WTC11 (cell line): ENCODE measurements at regions of chr4 and their contacts with region 1.

Region 1: DNA sequence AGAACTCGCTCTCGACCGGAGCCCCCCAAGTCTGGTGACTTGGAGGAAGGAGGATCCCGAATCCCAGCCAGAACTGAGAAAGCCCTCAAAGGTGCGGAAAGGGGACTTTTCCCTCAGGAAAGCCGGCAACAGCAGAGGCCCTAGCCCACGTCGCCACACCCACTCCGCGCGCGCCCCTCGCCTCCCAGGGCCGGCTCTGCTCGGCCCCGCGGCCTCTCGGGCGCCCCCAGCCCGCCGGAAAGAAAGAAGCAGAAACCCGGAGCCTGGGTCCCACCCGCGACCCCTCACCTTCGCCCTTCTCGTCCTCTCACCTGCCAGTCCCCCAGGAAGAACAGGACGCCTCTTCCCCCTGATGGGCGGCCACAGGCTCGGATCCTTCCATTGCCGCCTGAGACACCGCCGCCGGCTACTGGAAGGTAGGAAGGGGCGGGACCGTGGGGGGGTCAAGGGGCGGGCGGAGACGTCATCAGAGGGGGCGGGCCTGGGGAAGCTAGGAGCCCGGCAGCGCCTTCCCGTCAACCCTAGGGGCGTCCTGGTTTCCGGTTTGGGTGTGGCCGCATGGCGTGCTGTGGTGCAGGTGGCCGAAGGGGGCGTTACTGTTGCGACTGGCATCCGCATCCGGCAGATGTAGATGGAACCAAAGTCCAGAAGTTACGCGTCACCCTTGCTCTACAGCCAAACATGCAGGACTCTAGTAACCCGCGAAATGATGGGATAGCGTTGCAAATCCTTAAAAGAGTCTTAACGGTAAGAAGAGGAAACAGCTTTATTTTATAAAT is at the start of gene UBA6:
- DNase-seq: peak; percentile 96
- ATAC-seq: peak; percentile 97
- H3K4me3 Mint-ChIP-seq: peak within 1 kb of the TSS; percentile 88
- H3K27ac Mint-ChIP-seq: peak within 1 kb of the TSS; percentile 97
- H3K4me1 Mint-ChIP-seq: peaks cover 27% of the 10 kb centered on the region
- H3K27me3 Mint-ChIP-seq: no peaks in the 10 kb centered on the region
- CTCF ChIP-seq: peak; percentile 38; the same call in 1 of the 2 replicates
- total RNA-seq, gene UBA6: 71.5 to 81.5 TPM (median 79.0 TPM) in 3 replicates

Region 2: GRCh38 chr4:67638136-67638535 is 62.8 kb before region 1 on chr4:
- CTCF ChIA-PET with region 1: no interaction called
- POLR2A ChIA-PET with region 1: no interaction called
- DNase-seq: no peak
- ATAC-seq: no peak
- H3K4me3 Mint-ChIP-seq: no peak overlapping the region
- H3K27ac Mint-ChIP-seq: no peak overlapping the region
- H3K4me1 Mint-ChIP-seq: no peaks in the 10 kb centered on the region
- H3K27me3 Mint-ChIP-seq: no peaks in the 10 kb centered on the region
- CTCF ChIP-seq: no peak

Region 3: DNA sequence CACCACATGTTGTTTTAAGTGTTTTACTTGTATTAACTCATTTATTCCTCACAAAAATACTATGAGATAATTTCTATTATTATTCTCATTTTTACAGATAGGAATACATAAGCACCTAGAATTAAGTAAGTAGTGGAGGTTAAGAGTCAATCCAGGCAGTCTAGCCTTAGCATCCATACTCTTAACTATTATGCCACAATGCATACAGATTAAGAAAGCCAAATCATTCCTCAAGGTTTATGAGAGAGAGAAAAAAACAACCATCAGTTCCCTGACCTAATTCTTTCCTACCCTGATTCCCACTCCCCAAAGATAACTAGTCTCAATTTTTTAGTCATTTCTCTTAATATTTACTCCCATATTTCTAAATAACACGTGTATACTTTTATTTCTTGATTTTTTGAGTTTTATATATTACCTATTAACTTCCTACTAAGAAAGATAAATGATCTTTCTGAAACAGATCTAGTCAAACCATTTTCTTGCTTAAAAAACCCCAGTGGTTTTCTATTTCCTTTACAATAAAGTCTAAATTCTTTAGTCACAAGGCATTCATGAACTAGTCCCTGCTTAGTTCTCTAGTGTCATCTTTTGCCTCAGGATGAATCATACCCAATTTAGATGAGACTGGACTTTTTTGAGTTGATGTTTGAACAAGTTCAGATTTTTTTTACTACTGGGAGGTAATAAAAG is 15.9 kb before region 1 on chr4:
- CTCF ChIA-PET with region 1: no interaction called
- POLR2A ChIA-PET with region 1: no interaction called
- DNase-seq: no peak
- ATAC-seq: no peak
- H3K4me3 Mint-ChIP-seq: no peak overlapping the region
- H3K27ac Mint-ChIP-seq: no peak overlapping the region
- H3K4me1 Mint-ChIP-seq: peaks cover 3% of the 10 kb centered on the region; the same call in 1 of the 2 replicates
- H3K27me3 Mint-ChIP-seq: no peaks in the 10 kb centered on the region
- CTCF ChIP-seq: no peak

Region 4: DNA sequence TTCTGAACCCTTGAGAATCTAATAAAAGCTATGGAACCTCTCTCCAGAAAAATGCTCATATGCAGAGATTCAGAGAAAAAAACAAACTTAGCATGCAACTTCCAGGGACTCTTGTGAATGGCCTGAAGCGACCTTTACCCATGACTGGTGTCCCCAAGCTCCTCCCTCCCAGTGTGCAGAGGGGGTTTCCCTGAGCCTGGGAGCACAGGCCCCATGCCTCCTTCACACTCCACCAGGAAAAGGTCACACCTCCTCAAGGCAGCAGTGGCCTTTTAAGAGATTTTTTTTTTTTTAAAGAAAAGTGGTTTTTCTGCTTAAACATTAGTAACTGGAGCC is 13.3 kb after region 1 on chr4:
- CTCF ChIA-PET with region 1: interaction called, 20 read pairs
- POLR2A ChIA-PET with region 1: interaction called, 4 read pairs
- DNase-seq: no peak
- ATAC-seq: no peak
- H3K4me3 Mint-ChIP-seq: no peak overlapping the region
- H3K27ac Mint-ChIP-seq: no peak overlapping the region
- H3K4me1 Mint-ChIP-seq: peaks cover 43% of the 10 kb centered on the region
- H3K27me3 Mint-ChIP-seq: no peaks in the 10 kb centered on the region
- CTCF ChIP-seq: no peak

Region 5: DNA sequence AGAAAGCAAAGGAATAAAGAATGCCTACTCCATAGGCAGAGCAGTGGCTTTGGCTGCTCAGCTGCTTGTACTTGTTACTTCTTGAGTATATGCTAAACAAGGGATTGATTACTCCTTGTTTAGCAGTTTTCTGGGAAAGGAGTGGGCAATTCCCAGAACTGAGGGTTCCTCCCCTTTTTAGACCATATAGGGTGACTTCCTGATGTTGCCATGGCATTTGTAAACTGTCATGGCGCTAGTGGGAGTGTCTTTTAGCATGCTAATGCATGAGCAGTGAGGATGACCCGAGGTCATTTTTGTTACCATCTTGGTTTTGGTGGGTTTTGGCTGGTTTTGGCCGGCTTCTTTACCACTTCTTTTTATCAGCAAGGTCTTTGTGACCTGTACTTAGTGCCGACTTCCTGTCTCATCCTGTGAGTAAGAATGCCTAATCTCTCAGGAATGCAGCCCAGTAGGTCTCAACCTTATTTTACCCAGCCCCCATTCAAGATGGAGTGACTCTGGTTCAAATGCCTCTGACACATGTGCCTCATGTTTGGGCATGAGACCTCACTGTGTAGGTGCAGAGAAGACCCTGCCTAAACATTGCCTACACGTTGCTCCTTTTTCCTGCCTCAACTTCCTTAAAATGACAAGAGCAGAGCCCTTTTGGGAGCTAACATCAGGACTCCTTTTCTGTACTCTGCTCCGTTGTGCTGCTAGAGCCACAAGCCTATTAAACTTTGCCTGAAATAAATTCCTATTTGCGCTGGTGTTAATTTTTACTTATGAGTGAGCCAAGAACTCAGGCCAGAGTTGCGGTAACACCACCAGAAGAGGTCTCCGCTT is 21.1 kb after region 1 on chr4:
- CTCF ChIA-PET with region 1: interaction called, 14 read pairs
- POLR2A ChIA-PET with region 1: no interaction called
- DNase-seq: peak; percentile 36
- ATAC-seq: peak; percentile 64
- H3K4me3 Mint-ChIP-seq: no peak overlapping the region
- H3K27ac Mint-ChIP-seq: peak overlapping the region; percentile 88
- H3K4me1 Mint-ChIP-seq: peaks cover 26% of the 10 kb centered on the region
- H3K27me3 Mint-ChIP-seq: no peaks in the 10 kb centered on the region
- CTCF ChIP-seq: no peak